ENCODE measurements at regions of chr17 and their contacts with region 1.

Region 1: GRCh38 chr17:69523244-69523861 is 108.9 kb downstream of the MAP2K6 start:
- DNase-seq: peak; percentile 72
- H3K4me3 Mint-ChIP-seq: no peak overlapping the region
- H3K27ac Mint-ChIP-seq: no peak overlapping the region
- H3K4me1 Mint-ChIP-seq: peaks cover 5% of the 10 kb centered on the region
- H3K27me3 Mint-ChIP-seq: no peaks in the 10 kb centered on the region
- CTCF ChIP-seq: peak; percentile 70

Region 2: GRCh38 chr17:68972119-68972704 is 551.1 kb before region 1 on chr17:
- CTCF ChIA-PET with region 1: no interaction called
- POLR2A ChIA-PET with region 1: no interaction called
- intact Hi-C with region 1: loop called (anchors 2 kb)
- DNase-seq: peak; percentile 48
- H3K4me3 Mint-ChIP-seq: no peak overlapping the region
- H3K27ac Mint-ChIP-seq: no peak overlapping the region
- H3K4me1 Mint-ChIP-seq: no peaks in the 10 kb centered on the region
- H3K27me3 Mint-ChIP-seq: no peaks in the 10 kb centered on the region
- CTCF ChIP-seq: peak; percentile 63

Region 3: DNA sequence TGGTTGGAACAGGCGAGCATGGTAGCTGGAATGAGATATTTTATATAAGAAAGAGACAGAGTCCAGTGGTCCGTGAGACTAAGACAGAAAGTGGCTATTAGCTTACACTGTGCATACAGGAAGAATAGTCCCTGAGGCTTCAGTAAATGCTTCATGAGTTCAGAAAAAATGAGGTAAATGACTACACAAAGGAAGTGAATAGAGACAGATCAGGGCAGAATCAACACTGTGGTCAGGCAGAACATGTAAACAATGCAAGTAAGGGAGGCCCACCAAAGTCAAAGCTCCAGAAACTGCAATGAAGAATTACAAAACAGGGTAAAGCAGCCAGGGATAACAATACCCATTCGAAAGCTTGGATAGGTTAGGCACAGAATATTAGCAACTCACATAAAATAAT is 299.5 kb before region 1 on chr17:
- CTCF ChIA-PET with region 1: no interaction called
- POLR2A ChIA-PET with region 1: no interaction called
- intact Hi-C with region 1: no loop called
- DNase-seq: no peak
- H3K4me3 Mint-ChIP-seq: no peak overlapping the region
- H3K27ac Mint-ChIP-seq: no peak overlapping the region
- H3K4me1 Mint-ChIP-seq: peaks cover 3% of the 10 kb centered on the region
- H3K27me3 Mint-ChIP-seq: no peaks in the 10 kb centered on the region
- CTCF ChIP-seq: no peak

Region 4: DNA sequence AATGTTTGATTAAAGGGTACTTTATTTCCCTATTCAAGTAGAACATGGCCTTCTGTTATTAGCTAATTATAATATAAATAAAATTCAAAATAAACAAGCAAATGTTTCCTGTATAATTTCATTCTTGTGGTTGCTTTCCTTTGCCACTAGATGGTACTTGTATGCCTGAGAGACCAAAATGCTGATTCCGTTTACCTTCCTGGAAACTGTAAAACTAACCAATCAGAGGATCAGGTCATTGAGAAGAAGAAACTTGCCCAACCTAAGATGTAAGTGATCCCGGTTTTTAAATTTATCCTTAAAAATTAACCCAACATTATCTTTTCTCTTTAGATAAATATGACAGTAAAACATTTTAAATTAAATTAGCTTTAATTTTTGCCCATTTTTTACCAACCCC is 188.3 kb before region 1 on chr17:
- CTCF ChIA-PET with region 1: interaction called, 107 read pairs
- POLR2A ChIA-PET with region 1: interaction called, 11 read pairs
- intact Hi-C with region 1: loop called (anchors 1 kb)
- DNase-seq: peak; percentile 44
- H3K4me3 Mint-ChIP-seq: no peak overlapping the region
- H3K27ac Mint-ChIP-seq: no peak overlapping the region
- H3K4me1 Mint-ChIP-seq: no peaks in the 10 kb centered on the region
- H3K27me3 Mint-ChIP-seq: no peaks in the 10 kb centered on the region
- CTCF ChIP-seq: peak; percentile 48

Region 5: DNA sequence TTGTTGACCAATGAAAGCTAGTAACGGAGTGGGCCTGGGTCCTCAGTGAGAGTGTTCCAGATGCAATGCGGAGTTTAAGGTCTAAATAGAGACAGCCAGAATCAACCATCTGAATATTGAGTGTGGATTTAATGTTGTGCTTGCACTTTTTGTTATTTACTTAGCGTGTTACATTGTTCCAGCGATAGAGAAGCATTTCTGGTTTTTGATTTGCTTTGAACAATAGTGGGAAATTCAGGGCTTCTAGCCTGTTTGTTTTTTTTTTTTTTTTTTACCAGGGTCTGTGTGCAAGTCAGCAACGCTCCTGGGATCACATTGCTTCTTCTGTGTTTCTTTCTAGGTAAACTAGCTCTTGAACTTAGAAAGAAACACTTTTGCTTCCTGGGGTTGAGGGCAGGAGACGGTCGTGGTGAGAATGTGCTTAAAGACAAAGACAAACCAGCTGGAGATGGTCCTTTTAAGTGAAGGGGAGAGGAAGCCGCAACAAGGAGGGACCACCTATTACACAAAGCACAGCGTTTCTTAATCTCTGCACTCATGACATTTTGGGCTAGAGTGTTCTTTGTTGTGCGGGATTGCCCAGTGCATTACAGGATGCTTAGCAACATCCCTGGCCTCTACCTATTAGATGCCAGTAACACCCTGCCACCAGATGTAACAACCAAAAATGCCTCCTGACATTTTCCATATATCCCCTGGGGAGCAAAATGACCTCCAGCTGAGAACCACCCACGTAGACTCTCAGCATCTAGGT is 10.3 kb after region 1 on chr17:
- CTCF ChIA-PET with region 1: interaction called, 23 read pairs
- POLR2A ChIA-PET with region 1: no interaction called
- intact Hi-C with region 1: no loop called
- DNase-seq: no peak
- H3K4me3 Mint-ChIP-seq: no peak overlapping the region
- H3K27ac Mint-ChIP-seq: no peak overlapping the region
- H3K4me1 Mint-ChIP-seq: no peaks in the 10 kb centered on the region
- H3K27me3 Mint-ChIP-seq: no peaks in the 10 kb centered on the region
- CTCF ChIP-seq: no peak

Region 6: GRCh38 chr17:70144260-70144846 is 621.0 kb after region 1 on chr17:
- CTCF ChIA-PET with region 1: interaction called, 4 read pairs
- POLR2A ChIA-PET with region 1: no interaction called
- intact Hi-C with region 1: loop called (anchors 2 kb)
- DNase-seq: peak; percentile 49
- H3K4me3 Mint-ChIP-seq: no peak overlapping the region
- H3K27ac Mint-ChIP-seq: peak overlapping the region; percentile 33
- H3K4me1 Mint-ChIP-seq: no peaks in the 10 kb centered on the region
- H3K27me3 Mint-ChIP-seq: no peaks in the 10 kb centered on the region
- CTCF ChIP-seq: peak; percentile 44

Region 7: DNA sequence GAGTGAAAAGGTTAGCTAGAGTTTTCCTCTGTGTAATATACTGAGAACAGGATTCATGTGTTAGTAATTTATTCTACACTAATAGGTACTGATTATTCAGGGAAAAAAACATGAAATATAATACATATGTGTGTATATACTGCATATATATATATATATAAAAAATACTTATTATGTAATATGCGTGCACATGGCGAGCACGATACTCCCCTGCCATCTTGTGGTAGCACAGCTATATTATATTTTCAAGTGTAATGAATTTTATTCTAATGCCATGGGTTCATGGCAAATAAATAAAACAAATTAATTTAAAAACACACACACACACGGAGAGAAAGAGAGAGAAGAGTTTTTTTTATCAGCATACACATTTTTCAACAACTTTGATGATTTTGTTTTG is 1106.5 kb after region 1 on chr17:
- CTCF ChIA-PET with region 1: interaction called, 56 read pairs
- POLR2A ChIA-PET with region 1: interaction called, 5 read pairs
- intact Hi-C with region 1: loop called (anchors 1 kb)
- DNase-seq: peak; percentile 16
- H3K4me3 Mint-ChIP-seq: no peak overlapping the region
- H3K27ac Mint-ChIP-seq: no peak overlapping the region
- H3K4me1 Mint-ChIP-seq: no peaks in the 10 kb centered on the region
- H3K27me3 Mint-ChIP-seq: peaks cover 52% of the 10 kb centered on the region
- CTCF ChIP-seq: peak; percentile 60